H1 (cell line): ENCODE measurements at regions of chr1 and their contacts with region 1.

Region 1: DNA sequence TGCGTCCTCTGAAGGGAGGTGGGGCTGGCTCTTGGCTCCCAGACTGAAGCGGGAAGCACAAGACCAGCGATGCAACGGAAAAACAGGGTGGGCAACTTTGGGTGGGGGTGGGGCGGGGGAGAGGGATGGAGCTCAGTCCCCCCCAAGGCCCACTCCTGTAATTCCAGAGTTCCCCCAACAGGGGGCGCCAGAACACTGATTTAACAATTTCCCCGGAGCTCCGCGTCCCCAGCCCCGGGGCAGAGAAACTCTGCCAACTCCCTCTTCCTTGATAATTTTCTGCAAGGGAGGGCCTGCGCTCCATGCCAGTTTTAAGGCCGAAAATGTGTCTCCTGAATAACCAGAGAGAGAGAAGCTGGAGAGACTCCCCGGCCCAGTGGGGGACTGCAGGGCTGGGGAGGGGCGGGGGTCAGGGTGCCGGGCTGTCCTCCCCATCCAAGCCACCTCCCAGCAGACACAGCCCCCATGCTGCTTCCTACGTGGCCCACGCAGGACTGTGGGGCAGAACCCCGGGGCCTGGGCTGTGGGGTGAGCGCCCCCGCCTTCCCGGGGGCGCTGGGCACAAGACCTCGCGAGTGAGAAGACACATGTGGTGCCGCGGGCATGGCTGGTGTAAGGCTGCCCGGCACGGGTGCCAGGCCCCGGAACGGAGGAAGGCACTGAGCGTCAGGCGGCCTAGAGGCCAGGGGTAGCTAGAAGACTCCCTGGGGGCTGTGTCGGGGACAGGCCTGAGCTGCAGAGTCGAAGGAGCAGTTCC is 51.4 kb downstream of the KIF21B start:
- DNase-seq: peak; percentile 27 to 90
- H3K4me3 ChIP-seq: no peak overlapping the region
- H3K27ac ChIP-seq: no peak overlapping the region
- H3K4me1 ChIP-seq: peaks cover 0 to 3% (median 0%) of the 10 kb centered on the region in 4 experiments; a peak in 1 of 7 replicates
- H3K27me3 ChIP-seq: no peaks in the 10 kb centered on the region
- CTCF ChIP-seq: peak; percentile 61 to 80 (median 68)
- EP300 ChIP-seq: no peak
- POLR2A ChIP-seq: no peak
- RAD21 ChIP-seq: peak; percentile 75 to 82

Region 2: GRCh38 chr1:200951016-200951415 is 21.1 kb before region 1 on chr1:
- CTCF ChIA-PET with region 1: interaction called, 16 read pairs
- POLR2A ChIA-PET with region 1: no interaction called
- DNase-seq: no peak
- H3K4me3 ChIP-seq: no peak overlapping the region
- H3K27ac ChIP-seq: no peak overlapping the region
- H3K4me1 ChIP-seq: no peaks in the 10 kb centered on the region
- H3K27me3 ChIP-seq: no peaks in the 10 kb centered on the region
- CTCF ChIP-seq: no peak
- EP300 ChIP-seq: no peak
- POLR2A ChIP-seq: no peak
- RAD21 ChIP-seq: no peak

Region 3: GRCh38 chr1:200999667-201000066 is 27.5 kb after region 1 on chr1:
- CTCF ChIA-PET with region 1: interaction called, 146 read pairs
- POLR2A ChIA-PET with region 1: no interaction called
- DNase-seq: no peak
- H3K4me3 ChIP-seq: no peak overlapping the region
- H3K27ac ChIP-seq: no peak overlapping the region
- H3K4me1 ChIP-seq: no peaks in the 10 kb centered on the region
- H3K27me3 ChIP-seq: no peaks in the 10 kb centered on the region
- CTCF ChIP-seq: no peak
- EP300 ChIP-seq: no peak
- POLR2A ChIP-seq: no peak
- RAD21 ChIP-seq: no peak

Region 4: DNA sequence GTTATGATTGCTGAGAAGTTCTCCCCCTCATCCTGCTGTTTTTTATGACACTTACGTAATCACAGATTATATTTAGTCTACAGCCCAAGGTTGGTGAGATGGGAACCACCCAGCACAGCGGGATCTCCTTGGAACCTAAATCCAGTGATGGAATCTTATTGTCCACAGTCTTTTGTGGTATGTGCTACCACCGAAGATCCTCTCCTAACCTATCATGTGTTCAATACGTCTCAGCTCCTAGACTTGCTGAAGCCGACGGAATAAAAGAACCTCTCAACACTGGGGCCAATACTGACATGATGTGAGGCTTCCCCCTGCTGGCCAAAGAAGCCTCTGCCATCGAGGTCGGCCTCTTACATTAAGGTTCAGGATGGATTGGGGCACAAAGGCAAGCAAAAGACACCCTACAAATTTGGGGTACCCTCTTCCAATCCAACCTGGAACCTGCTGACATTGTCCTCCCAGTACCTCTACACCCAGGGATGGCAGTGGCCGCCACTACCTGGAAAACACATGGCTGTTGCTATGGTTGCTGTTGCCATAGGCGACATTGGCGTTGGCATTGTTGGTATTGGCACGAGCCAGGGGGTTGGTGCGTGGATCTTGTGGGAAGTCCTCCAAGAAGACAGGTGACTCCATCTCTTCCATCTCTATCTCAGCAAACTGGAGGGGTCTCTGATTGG is 70.8 kb after region 1 on chr1:
- CTCF ChIA-PET with region 1: interaction called, 640 read pairs
- POLR2A ChIA-PET with region 1: no interaction called
- DNase-seq: peak in 1 of 2 experiments; percentile 72
- H3K4me3 ChIP-seq: no peak overlapping the region
- H3K27ac ChIP-seq: no peak overlapping the region
- H3K4me1 ChIP-seq: no peaks in the 10 kb centered on the region
- H3K27me3 ChIP-seq: no peaks in the 10 kb centered on the region
- CTCF ChIP-seq: peak; percentile 88 to 98 (median 90)
- EP300 ChIP-seq: no peak
- POLR2A ChIP-seq: no peak
- RAD21 ChIP-seq: peak; percentile 94 to 95

Region 5: GRCh38 chr1:201108614-201109013 is 136.5 kb after region 1 on chr1:
- CTCF ChIA-PET with region 1: interaction called, 29 read pairs
- POLR2A ChIA-PET with region 1: no interaction called
- DNase-seq: no peak
- H3K4me3 ChIP-seq: no peak overlapping the region
- H3K27ac ChIP-seq: no peak overlapping the region
- H3K4me1 ChIP-seq: peaks cover 0 to 7% (median 3%) of the 10 kb centered on the region in 4 experiments; a peak in 3 of 7 replicates
- H3K27me3 ChIP-seq: peaks cover 0 to 3% (median 2%) of the 10 kb centered on the region in 4 experiments; a peak in 3 of 7 replicates
- CTCF ChIP-seq: no peak
- EP300 ChIP-seq: no peak
- POLR2A ChIP-seq: no peak
- RAD21 ChIP-seq: no peak

Region 6: DNA sequence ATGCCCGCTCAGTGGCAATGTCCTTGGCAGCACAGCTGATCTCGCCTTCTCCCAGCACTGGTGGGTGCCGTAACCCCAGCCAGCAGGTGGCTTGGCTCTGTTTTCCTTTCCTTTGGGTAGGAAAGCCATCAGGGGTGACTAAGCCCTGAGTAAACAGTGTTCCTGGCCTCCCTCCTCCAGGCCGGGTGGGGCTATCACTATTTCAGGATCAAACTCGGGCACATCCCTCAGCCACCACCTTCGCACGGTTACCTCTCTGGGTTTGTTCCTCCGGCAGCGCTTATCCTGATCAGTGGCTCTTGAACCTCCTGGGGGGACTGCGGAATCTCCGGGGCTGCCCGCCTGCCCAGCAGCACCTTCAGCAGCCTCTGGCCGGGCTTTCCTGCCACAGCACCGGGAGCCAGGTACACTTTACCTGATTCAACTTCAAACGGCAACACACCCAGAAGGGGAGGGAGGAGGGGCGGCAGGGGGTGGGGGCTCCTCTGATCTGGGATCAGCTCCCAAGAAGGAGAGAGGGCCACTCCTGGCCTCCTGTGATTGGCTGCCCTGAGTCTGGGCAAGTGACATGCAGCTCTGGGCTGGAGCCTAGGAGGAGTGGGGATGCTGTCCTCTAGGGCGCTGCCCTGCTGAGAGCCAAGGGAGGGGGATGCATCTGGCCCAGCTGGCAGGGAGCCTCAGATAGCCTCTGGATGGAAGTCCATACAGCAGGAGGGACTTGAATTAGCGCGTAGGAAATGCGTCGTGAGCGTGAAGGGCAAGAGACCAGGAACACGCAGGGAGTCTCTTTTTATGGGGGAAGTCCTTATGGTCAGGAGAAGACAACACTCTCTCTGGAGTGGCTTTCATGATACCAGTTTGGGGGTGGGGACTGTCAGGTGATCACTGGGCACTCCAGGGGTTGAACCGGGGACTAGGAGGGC is 155.0 kb after region 1 on chr1 and contains the start of gene ASCL5:
- CTCF ChIA-PET with region 1: interaction called, 10 read pairs
- POLR2A ChIA-PET with region 1: no interaction called
- DNase-seq: peak in 1 of 2 experiments; percentile 67
- H3K4me3 ChIP-seq: peak within 1 kb of the TSS in 1 of 4 experiments; percentile 35; a peak in 1 of 8 replicates
- H3K27ac ChIP-seq: no peak within 1 kb of the TSS
- H3K4me1 ChIP-seq: peaks cover 3 to 11% (median 9%) of the 10 kb centered on the region in 4 experiments
- H3K27me3 ChIP-seq: no peaks in the 10 kb centered on the region; a peak in 1 of 7 replicates
- CTCF ChIP-seq: no peak
- EP300 ChIP-seq: no peak
- POLR2A ChIP-seq: no peak
- RAD21 ChIP-seq: no peak
- total RNA-seq, gene ASCL5: 0.41 and 0.44 TPM in 2 replicates

Region 7: DNA sequence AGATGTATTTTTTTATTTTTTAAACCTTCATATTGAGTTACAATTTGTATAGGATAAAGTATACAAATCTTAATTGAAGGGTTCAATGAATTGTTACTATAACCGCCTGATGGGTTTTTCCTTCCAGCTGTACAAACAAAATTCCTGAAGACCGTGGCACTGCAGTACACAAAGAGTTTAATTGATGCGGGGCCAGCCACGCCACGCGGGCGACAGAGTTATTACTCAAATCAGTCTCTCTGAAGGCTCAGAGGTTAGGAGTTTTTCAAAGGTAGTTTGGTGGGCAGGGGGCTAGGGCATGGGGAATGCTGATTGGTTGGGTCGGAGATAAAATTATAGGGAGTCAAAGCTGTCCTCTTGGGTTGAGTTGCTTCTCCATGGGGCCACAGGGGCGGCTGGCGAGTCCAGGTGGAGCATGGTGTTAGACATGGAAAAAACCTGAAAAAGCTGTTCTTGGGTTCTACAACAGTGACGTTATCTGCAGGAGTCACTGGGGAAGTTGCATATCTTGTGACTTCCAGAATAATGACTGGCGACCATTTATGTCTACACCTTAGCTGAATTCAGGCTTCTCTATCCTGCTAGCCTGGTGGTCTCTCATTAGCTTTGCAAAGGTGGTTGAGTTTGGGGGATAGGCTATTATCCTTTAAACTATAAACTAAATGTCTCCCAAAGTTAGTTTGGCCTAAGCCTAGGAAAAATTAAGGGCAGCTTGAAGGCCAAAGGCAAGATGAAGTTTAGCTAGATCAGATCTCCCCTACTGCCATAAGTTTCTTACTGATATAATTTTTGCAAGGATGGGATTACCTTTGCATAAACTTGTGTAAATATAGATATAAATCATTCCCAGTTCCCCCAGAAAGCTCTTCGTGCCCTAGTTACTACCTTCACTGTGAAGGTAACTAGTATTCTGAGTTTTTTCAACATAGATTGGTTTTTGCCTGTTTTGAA is 195.2 kb after region 1 on chr1:
- CTCF ChIA-PET with region 1: no interaction called
- POLR2A ChIA-PET with region 1: no interaction called
- DNase-seq: no peak
- H3K4me3 ChIP-seq: no peak overlapping the region
- H3K27ac ChIP-seq: no peak overlapping the region
- H3K4me1 ChIP-seq: peaks cover 4 to 9% (median 6%) of the 10 kb centered on the region in 4 experiments; a peak in 6 of 7 replicates
- H3K27me3 ChIP-seq: peaks cover 0 to 6% (median 4%) of the 10 kb centered on the region in 4 experiments; a peak in 3 of 7 replicates
- CTCF ChIP-seq: no peak
- EP300 ChIP-seq: no peak
- POLR2A ChIP-seq: no peak
- RAD21 ChIP-seq: no peak